Left cardiac atrium (tissue), 4 donors: ENCODE measurements at regions of chr2 and their contacts with region 1.

Region 1: GRCh38 chr2:3461801-3462492 is 57.4 kb downstream of the ADI1 start:
- DNase-seq: no peak
- ATAC-seq: no peak

Region 2: DNA sequence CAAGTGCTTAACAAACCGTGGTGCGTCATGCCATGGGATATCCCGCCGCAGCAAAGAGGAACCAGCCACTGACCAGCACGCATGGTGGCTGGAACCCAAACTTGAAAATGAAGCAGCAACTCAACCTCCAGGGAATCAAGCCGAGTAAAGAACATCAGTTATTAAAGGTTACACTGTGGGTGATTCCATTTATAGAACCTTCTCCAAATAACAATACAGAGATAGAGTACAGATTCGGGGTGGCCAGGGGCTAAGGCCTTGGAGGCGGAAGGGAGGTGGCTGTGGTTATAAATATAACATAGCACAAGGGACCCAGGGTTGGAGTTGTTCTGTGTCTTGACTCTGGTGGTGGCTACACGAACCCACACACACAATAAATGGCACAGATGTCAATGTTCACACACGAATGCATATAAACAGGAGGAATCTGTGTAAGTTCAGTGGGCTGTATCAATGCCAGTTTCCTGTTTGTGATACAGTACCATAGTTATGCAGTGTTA is 207.5 kb before region 1 on chr2:
- intact Hi-C with region 1: no loop called
- DNase-seq: no peak
- ATAC-seq: no peak

Region 3: DNA sequence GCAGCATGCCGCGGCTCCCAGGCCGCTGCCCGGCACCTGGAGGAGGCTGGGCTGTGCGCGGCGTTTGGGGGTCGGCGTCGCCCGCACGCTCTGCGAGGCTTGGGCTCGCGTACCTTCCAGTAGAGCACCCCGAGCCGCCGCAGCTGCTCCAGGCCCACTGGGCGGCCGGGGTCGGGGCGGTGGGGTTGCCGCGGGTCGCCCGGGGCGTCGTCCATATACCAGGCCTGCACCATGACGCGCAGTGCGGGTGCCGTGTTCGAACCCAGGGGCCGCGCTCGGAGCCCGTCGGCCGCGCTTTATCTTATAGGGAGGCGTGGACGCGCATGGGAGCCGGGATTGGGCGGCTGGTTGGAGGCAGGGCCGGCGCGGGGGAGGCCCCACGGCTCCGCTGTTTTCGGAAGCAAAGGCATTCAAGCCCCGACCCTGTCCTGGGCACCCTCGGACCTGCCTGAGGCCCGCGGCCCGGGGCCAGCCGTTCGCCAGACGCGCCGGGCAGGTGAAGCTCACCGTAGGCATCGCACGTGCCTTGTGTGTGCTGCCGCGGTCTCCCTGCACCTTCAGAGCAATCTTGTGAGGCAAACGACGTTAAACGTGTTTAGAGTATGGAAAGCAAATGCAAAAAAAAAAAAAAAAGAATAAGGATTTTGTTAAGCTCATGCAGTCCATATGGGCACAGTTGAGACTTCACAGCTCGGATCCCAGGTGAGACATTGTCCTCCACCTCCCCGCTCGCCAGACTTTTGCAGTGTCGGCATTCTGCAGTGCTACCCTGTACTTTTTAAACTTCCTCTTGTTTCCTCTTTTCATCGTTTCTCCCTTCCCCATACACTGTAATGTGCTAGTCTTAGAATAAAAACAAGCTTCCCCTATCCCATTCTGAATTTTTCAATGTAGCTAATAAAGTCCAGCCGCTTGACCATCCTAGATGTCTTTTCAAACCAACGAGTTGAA is 57.6 kb after region 1 on chr2 and contains the start of gene ADI1:
- intact Hi-C with region 1: loop called in 1 of 2 experiments (anchors 5 kb)
- DNase-seq: peak; percentile 88
- ATAC-seq: peak; percentile 79 to 88
- total RNA-seq, gene ADI1: 102 to 128 TPM